ENCODE measurements at regions of chr4 and their contacts with region 1.

Region 1: DNA sequence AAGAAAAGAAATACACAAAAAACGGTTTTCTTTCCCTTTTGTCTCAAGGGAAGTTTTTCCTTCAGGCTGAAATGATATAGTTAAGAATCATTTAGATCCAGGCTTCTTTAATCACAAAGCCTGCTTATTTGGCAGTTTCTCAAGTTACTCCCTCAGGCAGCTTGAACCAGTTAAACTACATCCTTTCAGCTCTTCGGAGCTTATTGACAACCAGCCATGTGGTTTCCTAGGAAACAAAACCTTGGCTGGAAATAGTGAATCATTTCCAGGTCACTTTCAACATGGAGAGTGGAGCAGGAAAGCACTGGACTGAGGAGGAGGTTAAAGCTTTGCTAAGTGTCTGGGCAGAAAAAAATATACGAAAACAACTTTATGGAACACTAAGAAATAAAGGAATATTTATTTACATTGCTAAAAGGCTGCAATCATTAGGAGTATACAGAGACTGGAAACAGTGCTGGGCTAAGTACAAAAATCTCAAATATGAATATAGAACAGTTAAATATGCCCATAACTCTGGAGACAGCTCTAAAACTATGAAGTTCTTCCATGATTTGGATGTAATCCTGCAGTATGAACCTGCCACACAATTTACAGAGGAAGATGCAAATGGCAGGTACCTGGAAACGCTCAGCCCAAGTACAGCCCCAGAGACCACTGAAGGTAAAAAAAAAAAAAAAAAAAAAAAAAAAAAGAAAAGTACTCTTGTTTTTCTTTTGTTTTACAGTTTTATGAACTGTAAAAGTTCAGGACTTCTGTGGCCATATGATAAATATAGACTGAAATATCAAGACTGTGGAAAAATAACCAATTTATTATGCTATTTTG is 23.2 kb upstream of the AASDH start:
- DNase-seq: no peak
- ATAC-seq: peak; percentile 82; the same call in 1 of the 2 replicates
- H3K4me3 ChIP-seq: peak overlapping the region in 1 of 2 experiments; percentile 23; a peak in 2 of 4 replicates
- H3K27ac ChIP-seq: peak overlapping the region; percentile 29; the same call in 1 of the 2 replicates
- H3K4me1 ChIP-seq: peaks cover 9% of the 10 kb centered on the region
- H3K27me3 ChIP-seq: no peaks in the 10 kb centered on the region
- CTCF ChIP-seq: no peak

Region 2: GRCh38 chr4:56276547-56276946 is 133.9 kb before region 1 on chr4:
- CTCF ChIA-PET with region 1: no interaction called
- POLR2A ChIA-PET with region 1: no interaction called
- in situ Hi-C with region 1: no loop called
- intact Hi-C with region 1: no loop called
- DNase-seq: no peak
- ATAC-seq: no peak
- H3K4me3 ChIP-seq: no peak overlapping the region
- H3K27ac ChIP-seq: no peak overlapping the region
- H3K4me1 ChIP-seq: no peaks in the 10 kb centered on the region
- H3K27me3 ChIP-seq: no peaks in the 10 kb centered on the region
- CTCF ChIP-seq: no peak

Region 3: GRCh38 chr4:56348576-56348975 is 61.9 kb before region 1 on chr4:
- CTCF ChIA-PET with region 1: no interaction called
- POLR2A ChIA-PET with region 1: interaction called, 11 read pairs
- in situ Hi-C with region 1: no loop called
- intact Hi-C with region 1: no loop called
- DNase-seq: no peak
- ATAC-seq: no peak
- H3K4me3 ChIP-seq: no peak overlapping the region
- H3K27ac ChIP-seq: no peak overlapping the region
- H3K4me1 ChIP-seq: no peaks in the 10 kb centered on the region
- H3K27me3 ChIP-seq: no peaks in the 10 kb centered on the region
- CTCF ChIP-seq: no peak